ENCODE measurements at regions of chr20 and their contacts with region 1.

Region 1: DNA sequence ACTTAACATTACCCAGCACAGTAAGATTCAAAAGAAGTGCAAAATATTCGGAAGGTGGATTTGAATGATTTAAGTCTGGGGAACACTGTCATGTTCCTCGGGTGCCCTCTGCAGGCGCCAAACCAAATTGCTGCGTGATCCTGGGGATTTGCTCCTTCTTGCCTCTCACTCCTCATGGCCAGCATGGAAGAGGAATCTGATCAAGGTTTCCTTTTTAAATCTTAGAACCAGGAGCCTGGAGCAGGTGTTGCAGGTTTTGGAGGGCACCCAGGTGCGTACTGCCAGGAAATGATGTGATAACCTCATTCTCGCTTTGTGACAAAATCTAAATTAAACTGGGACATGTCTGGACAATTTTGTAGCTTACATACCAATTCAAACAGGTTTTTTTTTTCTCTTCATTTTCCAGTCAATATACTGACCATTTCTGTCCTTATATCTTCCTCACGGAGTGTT is 8.1 kb upstream of the PFDN4 start:
- ATAC-seq: peak in 6 of 8 experiments; percentile 29 to 85 (median 74)
- H3K4me3 ChIP-seq: no peak overlapping the region
- H3K27ac ChIP-seq: no peak overlapping the region
- H3K4me1 ChIP-seq: peaks cover 0 to 5% of the 10 kb centered on the region in 2 donors

Region 2: GRCh38 chr20:53974785-53975555 is 224.8 kb before region 1 on chr20:
- in situ Hi-C with region 1: no loop called
- ATAC-seq: peak in 2 of 8 experiments; percentile 31 to 54
- H3K4me3 ChIP-seq: no peak overlapping the region
- H3K27ac ChIP-seq: no peak overlapping the region
- H3K4me1 ChIP-seq: peaks cover 0 to 7% of the 10 kb centered on the region in 2 donors

Region 3: GRCh38 chr20:54093423-54094267 is 106.1 kb before region 1 on chr20:
- in situ Hi-C with region 1: loop called in 1 of 9 experiments (anchors 5 kb)
- ATAC-seq: peak in 1 of 8 experiments; percentile 55
- H3K4me3 ChIP-seq: no peak overlapping the region
- H3K27ac ChIP-seq: no peak overlapping the region
- H3K4me1 ChIP-seq: no peaks in the 10 kb centered on the region

Region 4: DNA sequence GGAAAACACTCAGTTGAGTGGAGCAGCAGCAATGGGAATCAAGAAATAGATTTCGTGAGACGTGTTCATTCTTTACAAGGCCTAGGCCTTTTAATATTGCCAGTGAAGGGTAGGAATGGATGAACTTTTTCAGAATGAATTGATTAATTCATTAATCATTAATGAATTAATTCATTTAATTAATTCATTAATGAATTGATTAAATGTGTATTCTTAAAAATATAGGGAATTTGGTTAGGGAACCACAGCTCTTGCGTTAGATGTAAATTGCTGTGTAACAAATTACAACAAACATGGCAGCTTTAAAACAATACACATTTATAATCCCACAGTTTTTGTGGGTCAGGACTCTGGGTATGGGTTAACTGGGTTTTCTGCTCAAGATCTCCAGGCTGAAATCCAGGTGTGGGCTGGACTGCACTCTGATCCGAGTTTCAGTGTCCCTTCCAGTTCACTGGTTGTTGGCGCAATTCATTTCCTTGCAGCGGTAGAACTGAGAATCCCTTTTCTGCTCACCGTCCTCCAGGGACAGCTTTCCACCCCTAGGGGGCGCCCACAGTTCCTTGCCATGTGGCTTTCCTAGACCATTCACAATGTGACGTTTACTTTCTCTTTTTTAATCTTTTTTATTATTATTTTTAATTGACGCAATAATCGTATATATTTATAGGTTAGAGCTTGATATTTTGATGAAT is 96.5 kb before region 1 on chr20:
- in situ Hi-C with region 1: loop called in 3 of 9 experiments (anchors 5 to 10 kb)
- ATAC-seq: peak in 4 of 8 experiments; percentile 56 to 91 (median 77)
- H3K4me3 ChIP-seq: no peak overlapping the region
- H3K27ac ChIP-seq: no peak overlapping the region
- H3K4me1 ChIP-seq: no peaks in the 10 kb centered on the region